ENCODE measurements at regions of chr19 and their contacts with region 1.

Region 1: DNA sequence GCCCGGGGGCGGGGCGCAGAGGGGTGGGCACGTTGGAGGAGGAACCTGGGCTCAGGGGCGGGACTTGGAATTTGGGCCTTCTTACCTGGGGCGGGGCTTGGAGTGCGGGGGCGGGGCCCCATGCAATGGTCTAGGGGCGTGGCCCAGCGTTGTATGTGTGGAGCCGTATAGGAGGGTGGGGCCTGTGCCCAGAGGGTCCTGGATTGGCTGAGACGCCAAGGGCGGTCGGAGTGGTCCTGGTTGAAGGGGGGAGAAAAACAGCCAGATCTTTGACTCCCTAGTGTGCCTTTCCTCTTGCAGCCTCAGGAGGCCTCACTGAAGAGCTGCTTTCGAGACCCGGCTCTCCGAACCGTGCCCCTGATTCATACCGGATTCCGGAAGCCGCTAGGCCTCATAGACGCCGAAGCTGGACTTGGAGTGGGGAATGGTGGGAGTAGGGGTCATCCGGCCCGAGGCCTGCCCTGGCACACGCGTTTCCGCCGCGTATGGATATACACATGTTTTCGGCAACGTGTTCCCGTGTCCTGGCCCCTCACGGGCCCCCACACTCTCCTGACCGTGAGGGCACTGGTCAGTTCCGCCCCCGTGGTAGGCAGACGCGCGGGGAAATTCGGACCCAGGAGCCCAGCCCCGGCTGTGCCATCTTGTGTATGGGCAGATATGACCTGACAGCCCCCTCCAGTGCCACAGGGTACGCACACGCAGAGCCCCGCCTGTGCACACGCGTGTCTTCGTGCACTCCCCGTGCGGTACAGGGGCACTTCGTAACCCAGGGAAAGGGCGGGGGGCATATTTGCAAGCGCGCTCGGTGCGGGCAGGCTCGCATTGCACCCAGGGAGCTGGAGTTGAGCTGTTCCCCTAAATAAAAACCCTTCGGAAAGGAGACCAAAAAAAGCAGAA is 661 bp upstream of the PRR12 start:
- DNase-seq: peak; percentile 98
- H3K4me3 ChIP-seq: peak overlapping the region; percentile 87 to 89
- H3K27ac ChIP-seq: peak overlapping the region; percentile 91 to 93
- H3K4me1 ChIP-seq: peaks cover 3% of the 10 kb centered on the region
- H3K27me3 ChIP-seq: no peaks in the 10 kb centered on the region
- CTCF ChIP-seq: peak in 1 of 4 experiments; percentile 21
- POLR2A ChIP-seq: peak; percentile 75

Region 2: DNA sequence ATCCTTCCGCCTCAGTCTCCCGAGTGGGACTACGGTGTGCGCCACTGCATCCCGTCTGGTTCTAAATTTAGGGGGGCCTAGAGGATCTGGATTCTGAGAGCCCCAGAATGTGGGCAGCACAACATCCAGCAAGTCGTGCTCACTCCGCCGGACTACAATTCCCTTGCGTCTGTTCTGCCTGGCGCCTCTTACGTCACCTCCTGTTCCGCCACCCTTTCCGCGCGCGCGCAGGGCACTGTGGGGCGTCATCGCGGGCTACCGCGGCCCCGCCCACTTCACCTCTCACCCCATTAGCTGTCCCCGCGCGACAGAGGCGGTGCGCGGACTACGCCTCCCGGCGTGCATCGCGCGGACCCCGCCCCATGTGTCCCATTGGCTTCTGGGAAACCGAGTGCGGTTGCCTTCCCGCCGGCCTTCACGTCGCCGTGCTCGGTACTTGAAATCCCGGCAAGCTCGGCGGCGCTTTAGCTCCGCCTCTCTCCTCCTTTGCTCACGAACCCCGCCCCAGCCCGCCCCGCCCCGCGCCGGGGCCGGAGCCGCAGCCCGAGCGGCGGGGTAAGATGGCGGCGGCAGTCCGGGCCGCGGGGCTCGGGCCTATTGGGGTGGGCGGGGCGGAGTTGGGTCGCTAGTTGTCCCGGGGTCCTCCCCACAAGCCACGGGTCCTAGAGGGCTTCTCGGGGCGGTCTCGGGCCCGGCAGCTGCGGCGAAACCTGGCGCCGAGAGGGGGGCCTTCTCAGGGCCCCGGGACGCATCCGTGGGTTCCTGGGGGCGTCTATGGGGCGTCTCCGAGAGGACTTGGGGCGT is 51.6 kb after region 1 on chr19 and contains the start of gene SCAF1:
- intact Hi-C with region 1: loop called (anchors 2 kb)
- DNase-seq: peak; percentile 99
- H3K4me3 ChIP-seq: peak within 1 kb of the TSS; percentile 95 to 96
- H3K27ac ChIP-seq: peak within 1 kb of the TSS; percentile 97 to 98
- H3K4me1 ChIP-seq: peaks cover 22% of the 10 kb centered on the region
- H3K27me3 ChIP-seq: no peaks in the 10 kb centered on the region
- CTCF ChIP-seq: peak in 2 of 4 experiments; percentile 13 to 25
- POLR2A ChIP-seq: peak; percentile 96
- total RNA-seq, gene SCAF1: 47.9 to 80.8 TPM

Measured in prostate gland (tissue), 2 donors.